ENCODE measurements at regions of chr3 and their contacts with region 1.

Region 1: DNA sequence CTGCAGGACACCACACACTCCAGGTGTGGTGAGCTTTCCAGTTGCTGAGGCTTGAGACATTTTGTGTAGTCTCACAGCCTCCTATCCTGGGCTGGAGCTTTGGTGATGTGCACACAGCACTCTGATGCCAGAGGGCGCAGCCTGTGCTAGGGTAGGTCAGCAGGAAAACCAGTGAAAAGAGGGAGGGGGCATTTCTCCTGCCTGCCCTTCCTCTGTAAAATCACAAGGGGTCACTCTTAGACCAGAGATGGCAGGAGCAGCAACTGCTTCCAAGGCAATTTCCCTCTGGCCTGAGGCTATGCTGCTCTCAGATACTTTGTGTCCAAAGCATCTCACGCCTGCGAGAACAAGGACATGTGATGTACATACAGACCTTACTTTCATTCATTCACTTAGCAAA is 16.5 kb upstream of the MUSTN1 start:
- DNase-seq: peak in 1 of 5 donors; percentile 20
- ATAC-seq: peak; percentile 39 to 63 (median 55)
- H3K4me3 ChIP-seq: no peak overlapping the region
- H3K27ac ChIP-seq: no peak overlapping the region
- H3K4me1 ChIP-seq: peaks cover 0 to 5% (median 0%) of the 10 kb centered on the region in 12 donors
- H3K27me3 ChIP-seq: no peaks in the 10 kb centered on the region
- CTCF ChIP-seq: peak; percentile 13 to 61 (median 44)
- POLR2A ChIP-seq: no peak

Region 2: DNA sequence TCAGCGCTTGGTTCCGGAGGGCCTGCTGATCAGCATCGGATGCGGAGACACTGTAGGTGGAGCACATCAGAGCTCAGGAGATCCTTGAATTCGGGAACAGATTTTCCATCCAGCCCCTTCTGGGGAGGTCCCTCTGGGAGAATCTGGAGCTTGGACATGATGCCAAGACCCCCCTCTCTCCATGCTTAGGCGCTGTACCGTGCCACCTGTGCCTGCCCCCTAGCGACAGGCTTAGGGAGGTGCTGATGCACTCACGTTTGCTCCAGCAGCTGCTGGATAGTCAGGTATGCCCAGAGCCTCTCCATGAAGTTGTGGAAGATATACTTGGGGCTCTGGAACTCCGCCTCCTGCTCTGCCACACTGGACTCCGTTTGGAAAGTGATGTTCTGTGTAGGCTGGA is 30.6 kb before region 1 on chr3:
- intact Hi-C with region 1: no loop called
- DNase-seq: no peak
- ATAC-seq: peak in 1 of 4 donors; percentile 27
- H3K4me3 ChIP-seq: no peak overlapping the region
- H3K27ac ChIP-seq: no peak overlapping the region
- H3K4me1 ChIP-seq: no peaks in the 10 kb centered on the region
- H3K27me3 ChIP-seq: no peaks in the 10 kb centered on the region
- CTCF ChIP-seq: peak in 11 of 12 donors; percentile 10 to 46 (median 24)
- POLR2A ChIP-seq: no peak

Region 3: GRCh38 chr3:52915294-52915693 is 63.9 kb after region 1 on chr3:
- intact Hi-C with region 1: loop called in 1 of 10 experiments (anchors 10 kb)
- DNase-seq: no peak
- ATAC-seq: no peak
- H3K4me3 ChIP-seq: no peak overlapping the region
- H3K27ac ChIP-seq: no peak overlapping the region
- H3K4me1 ChIP-seq: peaks cover 0 to 9% (median 0%) of the 10 kb centered on the region in 12 donors
- H3K27me3 ChIP-seq: no peaks in the 10 kb centered on the region
- CTCF ChIP-seq: no peak
- POLR2A ChIP-seq: no peak